MCF 10A (cell line): ENCODE measurements at regions of chrX and their contacts with region 1.

Region 1: GRCh38 chrX:110418316-110419235 is 59.9 kb downstream of the RTL9 start:
- DNase-seq: no peak
- H3K4me3 Mint-ChIP-seq: no peak overlapping the region
- H3K27ac Mint-ChIP-seq: no peak overlapping the region
- H3K4me1 Mint-ChIP-seq: peaks cover 7% of the 10 kb centered on the region
- H3K27me3 Mint-ChIP-seq: peaks cover 89% of the 10 kb centered on the region
- CTCF ChIP-seq: no peak

Region 2: GRCh38 chrX:109797311-109797975 is 621.1 kb before region 1 on chrX:
- CTCF ChIA-PET with region 1: no interaction called
- POLR2A ChIA-PET with region 1: no interaction called
- intact Hi-C with region 1: no loop called
- DNase-seq: peak; percentile 17
- H3K4me3 Mint-ChIP-seq: no peak overlapping the region
- H3K27ac Mint-ChIP-seq: peak overlapping the region; percentile 8
- H3K4me1 Mint-ChIP-seq: peaks cover 15% of the 10 kb centered on the region
- H3K27me3 Mint-ChIP-seq: peaks cover 34% of the 10 kb centered on the region
- CTCF ChIP-seq: no peak

Region 3: DNA sequence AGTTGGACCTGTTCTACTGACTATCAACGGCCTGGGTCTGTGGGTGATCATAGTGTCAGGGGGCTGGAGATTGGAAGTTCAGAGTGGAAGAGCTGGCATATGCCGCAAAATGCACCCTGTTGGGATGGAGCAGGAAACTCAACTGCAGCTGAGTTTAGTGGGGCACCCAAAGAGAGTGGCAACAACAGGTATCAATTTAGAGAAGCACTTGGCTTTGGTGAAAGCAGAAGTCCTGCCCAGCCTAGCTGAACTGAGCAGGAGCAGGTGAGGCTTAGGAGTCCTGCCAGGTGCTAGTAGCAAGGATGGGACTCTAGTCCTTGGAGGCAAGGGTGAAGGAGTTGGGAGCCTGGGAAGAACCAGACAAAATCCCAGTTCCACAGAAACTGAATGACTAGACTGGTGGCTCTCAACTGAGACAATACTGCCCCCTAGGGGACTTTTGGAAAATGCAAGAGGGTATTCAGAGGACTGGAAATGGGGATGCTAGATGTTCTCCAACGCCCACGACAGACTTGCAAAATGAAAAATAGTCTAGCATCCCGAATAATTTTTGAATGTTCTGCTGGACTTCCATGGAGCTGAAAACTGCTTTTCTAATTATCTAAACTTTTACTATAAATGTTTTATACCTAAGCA is 10.5 kb before region 1 on chrX:
- CTCF ChIA-PET with region 1: interaction called, 35 read pairs
- POLR2A ChIA-PET with region 1: no interaction called
- intact Hi-C with region 1: no loop called
- DNase-seq: peak; percentile 85
- H3K4me3 Mint-ChIP-seq: no peak overlapping the region
- H3K27ac Mint-ChIP-seq: no peak overlapping the region
- H3K4me1 Mint-ChIP-seq: peaks cover 12% of the 10 kb centered on the region
- H3K27me3 Mint-ChIP-seq: peaks cover 61% of the 10 kb centered on the region
- CTCF ChIP-seq: peak; percentile 50